Activated CD4-positive, alpha-beta T cell treated with anti-CD3 and anti-CD28 coated beads, Interleukin-2, amount 10 ng/mL, durations not matched to agents 24 days and 14 days (primary cell): ENCODE measurements at regions of chr12 and their contacts with region 1.

Region 1: DNA sequence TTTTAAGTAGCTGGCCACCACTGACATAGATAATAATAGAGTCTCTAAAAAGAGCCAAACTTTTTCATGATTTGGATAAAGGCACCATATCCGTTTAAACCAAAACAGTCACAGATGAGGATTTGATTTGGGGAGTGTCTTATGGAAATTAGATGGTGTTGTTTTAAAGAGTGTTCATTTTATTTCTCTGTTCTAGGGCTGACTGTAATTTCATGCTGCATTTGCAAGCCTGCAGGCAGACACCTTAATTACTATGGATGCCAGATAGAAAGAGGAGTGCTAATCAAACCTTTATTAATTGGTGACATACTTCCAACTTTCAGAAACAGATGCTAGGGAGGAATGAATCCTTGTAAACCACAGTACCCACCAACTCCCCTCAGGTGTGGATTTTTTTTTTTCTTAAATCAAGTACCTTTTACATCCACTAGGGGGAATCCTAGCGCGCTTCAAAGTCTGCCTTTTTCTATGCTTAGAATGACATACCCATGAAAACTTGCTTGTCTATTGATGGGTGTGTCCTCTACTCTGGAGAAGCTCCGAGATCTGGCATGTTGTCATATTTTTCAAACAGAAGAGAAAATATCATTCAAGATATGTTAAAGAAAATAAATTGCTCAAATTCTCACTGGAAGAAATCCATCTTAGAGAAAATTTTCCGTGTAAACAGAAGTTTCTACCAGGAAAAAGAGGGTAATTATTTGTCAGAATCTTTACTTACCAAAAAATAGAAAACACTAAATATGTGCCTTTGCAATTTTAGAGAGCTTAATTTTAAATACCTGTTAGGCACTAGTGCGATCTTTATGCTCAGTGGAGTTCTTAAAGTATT is 14.2 kb upstream of the PLXNC1 start:
- DNase-seq: peak; percentile 82
- H3K4me3 Mint-ChIP-seq: no peak overlapping the region
- H3K27ac Mint-ChIP-seq: no peak overlapping the region
- H3K4me1 Mint-ChIP-seq: peaks cover 3% of the 10 kb centered on the region
- H3K27me3 Mint-ChIP-seq: peaks cover 17% of the 10 kb centered on the region

Region 2: GRCh38 chr12:94532490-94533422 is 398.6 kb after region 1 on chr12:
- intact Hi-C with region 1: loop called (anchors 1 kb)
- DNase-seq: peak; percentile 92
- H3K4me3 Mint-ChIP-seq: no peak overlapping the region
- H3K27ac Mint-ChIP-seq: no peak overlapping the region
- H3K4me1 Mint-ChIP-seq: peaks cover 14% of the 10 kb centered on the region
- H3K27me3 Mint-ChIP-seq: peaks cover 7% of the 10 kb centered on the region